ENCODE measurements at regions of chr22 and their contacts with region 1.

Region 1: DNA sequence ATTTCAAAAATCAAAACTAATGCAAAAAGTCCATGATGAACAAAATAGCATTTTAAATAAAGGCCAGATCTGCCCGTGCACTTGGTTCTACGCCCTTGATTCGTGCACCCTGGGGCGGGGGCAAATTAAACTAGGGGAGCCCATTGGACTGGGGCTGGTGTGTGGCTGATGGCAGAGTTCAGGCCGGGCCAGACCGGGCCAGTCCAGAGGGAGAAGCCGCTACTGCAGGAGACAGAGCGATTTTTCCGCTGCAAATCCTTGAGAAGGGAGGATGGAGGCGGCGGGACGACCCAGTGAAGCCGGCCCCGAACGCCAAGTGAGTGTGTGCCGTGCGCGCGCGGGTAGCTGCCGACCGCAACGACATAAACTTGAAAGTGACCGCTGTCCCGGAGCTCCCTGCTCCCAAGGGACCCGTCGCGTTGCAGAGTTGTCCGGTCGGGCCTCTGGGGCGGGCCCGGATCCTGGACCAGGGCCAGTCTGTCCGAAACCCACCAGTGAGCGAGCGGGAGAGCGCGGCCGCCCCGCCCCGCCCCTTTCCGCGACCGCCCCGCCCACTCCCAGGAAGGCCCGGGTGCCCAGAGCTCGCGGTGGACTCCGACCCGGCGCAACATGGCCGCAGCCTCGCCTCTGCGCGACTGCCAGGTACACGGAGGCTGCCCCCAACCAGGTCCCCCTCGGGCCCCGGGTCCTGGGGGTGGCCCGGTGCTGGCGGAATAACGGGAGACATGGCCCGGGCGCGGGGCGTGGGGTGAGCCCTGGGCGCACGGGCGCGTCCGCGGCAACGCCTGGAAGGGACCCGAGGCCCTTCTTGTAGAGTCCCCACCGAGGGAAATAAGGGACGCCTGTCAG is at the start of gene TTC38:
- DNase-seq: peak; percentile 71 to 94
- H3K4me3 ChIP-seq: peak within 1 kb of the TSS; percentile 58 to 78
- H3K27ac ChIP-seq: peak within 1 kb of the TSS; percentile 85 to 88
- H3K4me1 ChIP-seq: peaks cover 0 to 14% of the 10 kb centered on the region in 2 donors
- H3K27me3 ChIP-seq: no peaks in the 10 kb centered on the region
- CTCF ChIP-seq: no peak
- total RNA-seq, gene TTC38: 55.3 TPM

Region 2: GRCh38 chr22:46006379-46007002 is 261.2 kb before region 1 on chr22:
- intact Hi-C with region 1: loop called (anchors 5 kb)
- DNase-seq: peak; percentile 75 to 95
- H3K4me3 ChIP-seq: peak overlapping the region; percentile 31 to 37
- H3K27ac ChIP-seq: peak overlapping the region; percentile 97 to 99
- H3K4me1 ChIP-seq: peaks cover 21 to 28% of the 10 kb centered on the region in 2 donors
- H3K27me3 ChIP-seq: no peaks in the 10 kb centered on the region
- CTCF ChIP-seq: peak; percentile 90 to 98 (median 95)

Region 3: DNA sequence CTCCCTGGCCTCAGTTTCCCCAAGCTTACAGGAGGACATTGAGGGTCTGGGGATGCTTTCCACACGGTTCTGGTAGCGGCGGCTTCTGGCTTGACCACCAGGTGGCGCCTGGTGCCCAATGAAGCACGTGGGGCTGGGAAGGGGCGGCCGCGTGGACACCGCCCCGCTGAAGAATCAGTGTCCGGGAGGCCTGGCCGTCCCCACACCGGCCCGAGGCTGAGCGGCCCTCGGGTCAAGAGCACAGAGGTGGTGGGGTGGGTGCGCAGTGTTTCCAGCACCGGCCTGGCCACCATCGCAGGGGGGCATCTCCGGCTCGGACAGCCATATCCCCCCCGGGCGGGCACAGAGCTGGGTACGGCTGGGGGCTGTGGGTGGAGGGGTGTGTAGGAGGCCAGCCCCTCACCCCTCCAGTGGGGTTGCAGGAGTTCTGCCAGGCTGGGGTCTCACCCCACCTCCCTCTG is 145.1 kb before region 1 on chr22:
- intact Hi-C with region 1: loop called (anchors 2 kb)
- DNase-seq: no peak
- H3K4me3 ChIP-seq: peak overlapping the region in 1 of 2 donors; percentile 14
- H3K27ac ChIP-seq: no peak overlapping the region
- H3K4me1 ChIP-seq: peaks cover 0 to 4% of the 10 kb centered on the region in 2 donors
- H3K27me3 ChIP-seq: no peaks in the 10 kb centered on the region
- CTCF ChIP-seq: peak; percentile 87 to 98 (median 97)

Region 4: DNA sequence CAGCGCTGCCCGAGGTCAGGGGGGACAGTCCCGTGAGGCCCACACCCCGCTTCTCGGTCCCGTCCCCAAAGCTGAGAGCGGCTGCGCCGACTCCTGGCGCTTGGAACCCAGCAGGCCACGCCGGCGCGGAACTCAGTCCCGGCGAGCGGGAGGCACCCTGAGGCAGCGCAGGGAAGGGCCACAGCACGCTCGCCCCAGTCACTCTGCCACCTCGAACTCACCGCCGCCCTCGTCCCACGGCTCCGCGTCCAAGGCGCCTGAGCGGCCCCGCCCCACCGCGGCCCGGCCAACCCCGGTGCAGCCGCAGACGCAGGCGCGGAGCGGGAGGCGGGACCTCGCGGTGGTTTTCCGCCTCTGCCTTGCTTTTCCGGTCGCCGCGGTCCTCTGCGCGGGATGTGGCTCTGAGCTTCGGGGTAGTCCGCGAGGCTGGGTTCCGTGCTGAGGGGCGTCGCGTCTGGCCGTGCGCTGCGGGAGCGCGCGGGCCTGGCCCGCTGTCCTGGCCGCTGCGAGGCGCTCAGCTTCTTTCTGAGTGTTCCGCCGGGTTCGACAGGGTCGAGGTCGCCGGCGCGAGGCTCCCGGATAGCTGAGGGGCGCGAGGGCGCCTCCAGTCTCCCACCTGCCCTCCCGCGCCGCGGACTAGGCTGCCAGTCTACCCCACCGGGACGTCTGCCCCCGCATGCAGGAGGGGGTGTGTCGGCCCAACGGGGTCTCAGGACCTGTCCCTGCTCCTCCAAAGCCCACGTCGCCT is 17.4 kb before region 1 on chr22 and contains the start of gene CDPF1:
- intact Hi-C with region 1: loop called (anchors 1 kb)
- DNase-seq: peak; percentile 43 to 94
- H3K4me3 ChIP-seq: peak within 1 kb of the TSS; percentile 88 to 98
- H3K27ac ChIP-seq: peak within 1 kb of the TSS; percentile 82
- H3K4me1 ChIP-seq: peaks cover 10 to 11% of the 10 kb centered on the region in 2 donors
- H3K27me3 ChIP-seq: no peaks in the 10 kb centered on the region
- CTCF ChIP-seq: peak in 1 of 3 experiments; percentile 12
- total RNA-seq, gene CDPF1: 3.6 TPM

Region 5: GRCh38 chr22:46296257-46297150 is 28.8 kb after region 1 on chr22 and contains the start of gene GTSE1:
- intact Hi-C with region 1: loop called (anchors 1 kb)
- DNase-seq: peak; percentile 94 to 99
- H3K4me3 ChIP-seq: peak within 1 kb of the TSS; percentile 64 to 69
- H3K27ac ChIP-seq: peak within 1 kb of the TSS; percentile 87 to 95
- H3K4me1 ChIP-seq: peaks cover 0 to 14% of the 10 kb centered on the region in 2 donors
- H3K27me3 ChIP-seq: no peaks in the 10 kb centered on the region
- CTCF ChIP-seq: peak in 1 of 3 experiments; percentile 23
- total RNA-seq, gene GTSE1: not detected

Region 6: DNA sequence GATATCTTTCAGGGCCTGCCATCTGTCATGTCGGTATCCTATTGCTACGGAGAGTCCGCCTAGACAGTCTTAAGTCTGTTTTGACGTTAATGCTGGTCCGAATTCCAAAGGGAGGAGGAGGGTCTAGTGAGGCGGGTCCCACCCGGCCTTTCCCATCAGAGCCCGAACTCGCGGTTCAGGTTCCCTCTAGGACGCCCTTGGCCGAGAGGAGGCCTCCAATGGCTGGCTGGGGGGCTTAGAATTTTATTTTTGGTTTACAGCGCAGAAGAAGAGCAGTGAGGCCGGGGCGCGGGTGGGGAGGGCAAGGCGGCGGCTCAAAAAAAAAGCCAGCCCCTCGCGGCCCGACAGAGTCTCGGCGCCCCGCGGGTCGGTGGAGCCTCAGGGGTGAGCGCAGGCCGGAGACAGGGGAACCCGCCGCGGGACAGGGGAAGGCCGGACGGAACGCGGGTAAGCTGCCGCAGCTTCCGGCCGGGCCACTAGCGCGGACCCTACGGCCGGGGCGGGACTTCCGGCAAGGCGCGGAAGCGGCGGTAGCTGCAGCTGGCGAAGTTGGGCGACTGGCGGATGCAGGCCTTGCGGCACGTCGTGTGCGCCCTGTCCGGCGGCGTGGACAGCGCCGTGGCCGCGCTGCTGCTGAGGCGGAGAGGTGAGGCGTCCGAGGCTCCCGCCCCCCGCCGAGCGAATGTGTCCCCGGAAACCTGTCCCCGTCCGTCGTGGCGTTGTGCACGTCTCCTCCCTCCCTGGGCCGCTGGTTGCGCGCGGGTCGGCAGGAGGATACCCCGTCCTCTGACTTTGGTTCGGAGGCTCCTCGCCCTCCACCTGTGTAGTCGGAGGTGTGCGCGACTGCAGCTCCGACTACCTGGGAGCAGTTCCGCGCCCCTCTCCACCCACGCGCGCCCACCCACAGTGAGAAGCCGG is 67.8 kb after region 1 on chr22 and contains the start of gene TRMU:
- intact Hi-C with region 1: loop called (anchors 10 kb)
- DNase-seq: peak; percentile 23 to 88
- H3K4me3 ChIP-seq: peak within 1 kb of the TSS; percentile 71 to 76
- H3K27ac ChIP-seq: peak within 1 kb of the TSS; percentile 89 to 91
- H3K4me1 ChIP-seq: peaks cover 6 to 7% of the 10 kb centered on the region in 2 donors
- H3K27me3 ChIP-seq: no peaks in the 10 kb centered on the region
- CTCF ChIP-seq: no peak
- total RNA-seq, gene TRMU: 13.5 TPM

Measured in ascending aorta (tissue), 2 donors.